ENCODE measurements at regions of chr17 and their contacts with region 1.

Region 1: GRCh38 chr17:10618202-10618635 is 38.9 kb downstream of the MYH3 start:
- DNase-seq: no peak
- H3K4me3 ChIP-seq: no peak overlapping the region
- H3K27ac ChIP-seq: no peak overlapping the region
- H3K4me1 ChIP-seq: peaks cover 0 to 15% (median 9%) of the 10 kb centered on the region in 4 donors
- H3K27me3 ChIP-seq: no peaks in the 10 kb centered on the region
- CTCF ChIP-seq: peak; percentile 68 to 84 (median 70)
- EP300 ChIP-seq: no peak
- POLR2A ChIP-seq: no peak

Region 2: GRCh38 chr17:9959377-9959981 is 658.7 kb before region 1 on chr17:
- intact Hi-C with region 1: loop called (anchors 5 kb)
- DNase-seq: no peak
- H3K4me3 ChIP-seq: peak overlapping the region in 3 of 4 donors; percentile 17 to 29 (median 20)
- H3K27ac ChIP-seq: no peak overlapping the region
- H3K4me1 ChIP-seq: peaks cover 0 to 23% (median 17%) of the 10 kb centered on the region in 4 donors
- H3K27me3 ChIP-seq: peaks cover 0 to 33% (median 4%) of the 10 kb centered on the region in 4 donors
- CTCF ChIP-seq: peak in 2 of 3 experiments; percentile 36 to 39
- EP300 ChIP-seq: no peak
- POLR2A ChIP-seq: no peak

Region 3: DNA sequence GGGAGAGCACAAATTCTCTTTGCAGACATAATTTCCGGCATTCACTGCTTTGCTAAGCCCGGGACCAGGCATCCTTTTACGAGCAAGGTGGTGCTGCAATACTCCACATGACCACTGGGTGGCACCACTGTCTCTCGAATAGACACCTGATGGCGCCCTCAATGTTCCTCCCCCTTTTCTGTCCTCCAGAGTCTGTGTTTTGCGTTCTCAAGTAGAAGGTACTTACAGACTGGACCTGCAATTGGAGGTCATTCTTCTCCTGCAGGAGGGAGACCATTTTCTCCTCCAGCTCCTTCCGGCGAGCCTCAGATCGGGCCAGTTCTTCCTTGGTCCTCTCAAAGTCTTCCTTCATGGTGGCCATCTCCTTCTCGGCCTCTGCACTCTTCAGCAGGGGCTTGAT is 290.6 kb before region 1 on chr17:
- intact Hi-C with region 1: loop called (anchors 2 kb)
- DNase-seq: peak; percentile 94
- H3K4me3 ChIP-seq: no peak overlapping the region
- H3K27ac ChIP-seq: no peak overlapping the region
- H3K4me1 ChIP-seq: peaks cover 0 to 4% (median 0%) of the 10 kb centered on the region in 4 donors
- H3K27me3 ChIP-seq: peaks cover 0 to 10% (median 0%) of the 10 kb centered on the region in 4 donors
- CTCF ChIP-seq: peak; percentile 80 to 96 (median 87)
- EP300 ChIP-seq: no peak
- POLR2A ChIP-seq: no peak

Region 4: GRCh38 chr17:10557422-10557821 is 60.8 kb before region 1 on chr17:
- intact Hi-C with region 1: no loop called
- DNase-seq: no peak
- H3K4me3 ChIP-seq: no peak overlapping the region
- H3K27ac ChIP-seq: no peak overlapping the region
- H3K4me1 ChIP-seq: peaks cover 0 to 10% (median 0%) of the 10 kb centered on the region in 4 donors
- H3K27me3 ChIP-seq: no peaks in the 10 kb centered on the region
- CTCF ChIP-seq: no peak
- EP300 ChIP-seq: no peak
- POLR2A ChIP-seq: no peak